Mammary epithelial cell (primary cell): ENCODE measurements at regions of chr1 and their contacts with region 1.

Region 1: DNA sequence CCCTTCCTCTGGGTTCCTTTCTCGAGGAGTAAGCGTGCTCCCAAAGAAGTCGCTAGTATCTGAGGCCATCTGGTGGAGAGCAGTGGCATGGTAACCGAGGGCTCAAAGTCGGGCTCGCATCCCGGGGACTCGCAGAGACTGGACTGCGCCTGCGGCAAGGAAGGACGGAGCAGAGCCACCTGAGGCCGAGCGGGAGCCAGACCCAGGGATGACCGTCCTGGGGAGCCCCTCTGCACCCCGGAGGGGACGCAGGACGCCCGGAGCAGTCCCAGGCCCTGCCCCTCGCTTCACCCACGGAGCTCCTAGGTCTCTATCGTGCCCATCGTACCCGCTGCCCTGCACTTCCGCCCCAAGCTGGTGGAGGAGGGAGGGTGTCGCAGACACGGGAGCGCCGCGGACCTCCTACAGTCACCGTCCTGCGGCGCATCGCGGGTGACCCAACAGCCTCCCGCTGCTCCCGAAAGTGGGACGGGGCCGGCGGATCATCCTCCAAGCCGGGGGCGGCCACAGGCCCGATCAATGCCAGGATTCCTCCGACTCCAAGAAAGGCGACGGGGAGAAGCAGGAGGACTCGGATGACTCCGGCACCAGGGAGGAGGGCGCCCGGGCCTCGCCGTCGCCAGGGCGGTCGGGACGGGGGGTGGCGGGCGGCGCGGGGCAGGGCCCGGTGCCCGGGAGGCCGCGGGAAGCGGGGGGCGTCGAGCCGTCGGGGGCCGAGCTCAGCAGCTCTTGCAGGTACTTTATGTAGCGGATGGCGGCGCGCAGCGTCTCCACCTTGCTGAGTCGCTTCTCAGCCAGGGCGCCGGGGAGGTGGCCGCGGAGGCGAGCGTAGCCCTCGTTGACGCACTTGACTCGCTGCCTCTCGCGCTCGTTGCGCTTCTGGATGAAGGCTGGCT is 2.3 kb upstream of the CACNA1S start:
- DNase-seq: peak; percentile 91
- H3K4me3 ChIP-seq: peak overlapping the region; percentile 31 to 77 (median 63)
- H3K27ac ChIP-seq: no peak overlapping the region
- H3K4me1 ChIP-seq: peaks cover 3% of the 10 kb centered on the region
- H3K27me3 ChIP-seq: no peaks in the 10 kb centered on the region
- CTCF ChIP-seq: peak; percentile 80 to 92

Region 2: GRCh38 chr1:200558866-200559459 is 555.5 kb before region 1 on chr1:
- CTCF ChIA-PET with region 1: no interaction called
- dilution Hi-C with region 1: no loop called
- in situ Hi-C with region 1: no loop called
- intact Hi-C with region 1: loop called (anchors 2 kb)
- DNase-seq: peak; percentile 35
- H3K4me3 ChIP-seq: no peak overlapping the region
- H3K27ac ChIP-seq: no peak overlapping the region
- H3K4me1 ChIP-seq: no peaks in the 10 kb centered on the region
- H3K27me3 ChIP-seq: no peaks in the 10 kb centered on the region
- CTCF ChIP-seq: peak; percentile 60 to 73

Region 3: GRCh38 chr1:200896531-200897196 is 217.8 kb before region 1 on chr1:
- CTCF ChIA-PET with region 1: no interaction called
- dilution Hi-C with region 1: no loop called
- in situ Hi-C with region 1: no loop called
- intact Hi-C with region 1: loop called (anchors 2 kb)
- DNase-seq: peak; percentile 90
- H3K4me3 ChIP-seq: peak overlapping the region; percentile 23 to 76 (median 48)
- H3K27ac ChIP-seq: peak overlapping the region; percentile 37
- H3K4me1 ChIP-seq: peaks cover 50% of the 10 kb centered on the region
- H3K27me3 ChIP-seq: no peaks in the 10 kb centered on the region
- CTCF ChIP-seq: no peak

Region 4: DNA sequence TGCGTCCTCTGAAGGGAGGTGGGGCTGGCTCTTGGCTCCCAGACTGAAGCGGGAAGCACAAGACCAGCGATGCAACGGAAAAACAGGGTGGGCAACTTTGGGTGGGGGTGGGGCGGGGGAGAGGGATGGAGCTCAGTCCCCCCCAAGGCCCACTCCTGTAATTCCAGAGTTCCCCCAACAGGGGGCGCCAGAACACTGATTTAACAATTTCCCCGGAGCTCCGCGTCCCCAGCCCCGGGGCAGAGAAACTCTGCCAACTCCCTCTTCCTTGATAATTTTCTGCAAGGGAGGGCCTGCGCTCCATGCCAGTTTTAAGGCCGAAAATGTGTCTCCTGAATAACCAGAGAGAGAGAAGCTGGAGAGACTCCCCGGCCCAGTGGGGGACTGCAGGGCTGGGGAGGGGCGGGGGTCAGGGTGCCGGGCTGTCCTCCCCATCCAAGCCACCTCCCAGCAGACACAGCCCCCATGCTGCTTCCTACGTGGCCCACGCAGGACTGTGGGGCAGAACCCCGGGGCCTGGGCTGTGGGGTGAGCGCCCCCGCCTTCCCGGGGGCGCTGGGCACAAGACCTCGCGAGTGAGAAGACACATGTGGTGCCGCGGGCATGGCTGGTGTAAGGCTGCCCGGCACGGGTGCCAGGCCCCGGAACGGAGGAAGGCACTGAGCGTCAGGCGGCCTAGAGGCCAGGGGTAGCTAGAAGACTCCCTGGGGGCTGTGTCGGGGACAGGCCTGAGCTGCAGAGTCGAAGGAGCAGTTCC is 142.4 kb before region 1 on chr1:
- CTCF ChIA-PET with region 1: interaction called, 37 read pairs
- dilution Hi-C with region 1: no loop called
- in situ Hi-C with region 1: loop called in 1 of 2 experiments (anchors 10 kb)
- intact Hi-C with region 1: loop called (anchors 1 kb)
- DNase-seq: peak; percentile 6
- H3K4me3 ChIP-seq: no peak overlapping the region
- H3K27ac ChIP-seq: no peak overlapping the region
- H3K4me1 ChIP-seq: no peaks in the 10 kb centered on the region
- H3K27me3 ChIP-seq: no peaks in the 10 kb centered on the region
- CTCF ChIP-seq: peak; percentile 37 to 70

Region 5: DNA sequence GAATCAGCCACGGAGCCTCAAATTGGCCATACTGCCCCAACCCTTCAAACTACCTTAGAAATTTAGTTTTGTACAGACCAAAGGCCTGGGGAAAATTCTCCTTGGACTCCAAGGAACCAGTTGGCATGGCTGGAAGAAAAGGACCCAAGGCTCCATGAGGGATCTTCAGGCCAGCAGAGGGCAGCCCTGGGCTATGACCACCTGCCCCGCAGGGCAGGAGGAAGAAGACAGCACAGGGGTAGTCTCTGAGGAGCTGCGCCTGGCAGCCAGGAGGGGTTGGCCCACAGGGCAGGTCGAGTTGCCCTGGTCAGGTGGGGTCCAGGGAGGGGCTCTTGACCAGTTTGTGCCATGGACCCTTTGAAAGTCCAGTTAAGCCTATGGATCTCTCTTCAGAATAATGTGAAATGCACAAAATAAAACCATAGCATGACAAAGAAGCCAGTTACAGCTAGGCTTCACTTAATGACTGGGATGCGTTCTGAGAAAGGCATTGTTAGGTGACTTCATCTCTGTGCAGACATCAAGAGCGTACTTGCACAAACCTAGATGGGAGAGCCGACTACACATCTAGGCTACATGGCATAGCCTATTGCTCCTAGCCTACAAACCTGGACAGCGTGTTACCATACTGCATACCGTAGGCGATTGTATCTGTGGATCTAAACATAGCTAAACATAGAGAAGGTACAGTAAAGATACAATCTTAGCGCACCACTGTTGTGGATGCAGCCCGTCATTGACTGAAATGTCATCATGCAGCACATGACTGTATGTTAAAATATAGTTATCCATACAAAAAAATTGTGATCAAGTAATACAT is 28.4 kb before region 1 on chr1:
- CTCF ChIA-PET with region 1: interaction called, 5 read pairs
- dilution Hi-C with region 1: no loop called
- in situ Hi-C with region 1: no loop called
- intact Hi-C with region 1: loop called (anchors 1 kb)
- DNase-seq: peak; percentile 34
- H3K4me3 ChIP-seq: no peak overlapping the region
- H3K27ac ChIP-seq: no peak overlapping the region
- H3K4me1 ChIP-seq: peaks cover 17% of the 10 kb centered on the region
- H3K27me3 ChIP-seq: no peaks in the 10 kb centered on the region
- CTCF ChIP-seq: peak; percentile 55 to 85

Region 6: DNA sequence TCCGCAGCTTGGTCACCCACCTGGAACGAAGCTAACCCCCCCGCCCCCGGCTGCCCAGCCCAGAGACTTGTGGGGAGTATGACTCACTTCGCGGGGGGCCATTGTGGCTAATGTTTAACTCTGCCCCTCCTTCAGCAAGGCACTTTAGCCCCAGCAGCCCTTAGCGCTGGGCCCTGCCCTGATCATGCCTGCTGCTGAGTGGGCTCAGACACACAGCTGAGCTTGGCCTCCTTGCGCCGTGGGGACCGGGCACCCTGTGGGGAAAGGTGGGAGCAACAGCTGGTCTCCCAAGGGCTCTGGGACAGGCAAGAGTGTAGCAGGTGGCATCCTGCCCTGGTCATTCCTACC is 291.0 kb after region 1 on chr1:
- CTCF ChIA-PET with region 1: no interaction called
- dilution Hi-C with region 1: no loop called
- in situ Hi-C with region 1: no loop called
- intact Hi-C with region 1: no loop called
- DNase-seq: no peak
- H3K4me3 ChIP-seq: no peak overlapping the region
- H3K27ac ChIP-seq: no peak overlapping the region
- H3K4me1 ChIP-seq: peaks cover under 1% of the 10 kb centered on the region
- H3K27me3 ChIP-seq: no peaks in the 10 kb centered on the region
- CTCF ChIP-seq: no peak